Left cardiac atrium (tissue), 4 donors: ENCODE measurements at regions of chr7 and their contacts with region 1.

Region 1: GRCh38 chr7:6637544-6638229 is 569 bp downstream of the ZNF316 start:
- DNase-seq: no peak
- ATAC-seq: peak; percentile 34 to 38

Region 2: DNA sequence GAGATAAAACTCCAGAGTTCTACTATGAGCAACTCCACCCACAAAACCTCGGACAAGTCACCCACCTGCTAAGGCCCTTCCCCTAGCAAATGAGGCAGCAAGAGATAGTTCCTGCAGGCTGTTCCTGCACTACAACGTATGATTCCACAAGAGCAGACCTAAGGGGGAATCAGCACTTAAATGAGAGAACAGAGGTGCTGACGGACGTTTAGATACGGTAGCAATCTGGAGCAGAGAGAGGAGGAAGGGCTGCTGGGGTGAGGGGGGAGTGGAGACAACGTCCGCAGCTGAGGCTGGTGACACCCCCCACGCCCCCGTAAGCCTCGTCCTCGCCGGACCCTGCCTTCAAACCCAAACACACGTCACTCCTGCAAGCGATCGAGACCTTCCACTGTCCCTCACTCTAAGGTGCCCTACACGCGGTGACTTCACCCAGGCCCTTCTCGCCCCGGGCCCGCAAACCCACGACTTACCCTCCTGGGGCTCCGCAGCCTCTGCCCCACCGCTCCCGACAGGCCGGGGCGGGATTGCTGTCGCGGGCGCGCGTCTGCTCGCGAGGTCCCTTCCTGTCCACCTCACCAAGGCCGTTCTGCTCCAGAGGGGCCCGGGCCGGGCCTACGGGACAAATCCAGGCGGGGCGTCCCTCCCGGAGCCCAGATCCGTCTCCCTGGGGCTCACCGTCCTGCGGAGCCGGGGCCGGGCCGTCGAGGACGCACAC is 68.4 kb after region 1 on chr7:
- intact Hi-C with region 1: loop called in 1 of 2 experiments (anchors 2 kb)
- DNase-seq: peak; percentile 43
- ATAC-seq: peak; percentile 15 to 46